K562 (cell line): ENCODE measurements at regions of chr2 and their contacts with region 1.

Region 1: DNA sequence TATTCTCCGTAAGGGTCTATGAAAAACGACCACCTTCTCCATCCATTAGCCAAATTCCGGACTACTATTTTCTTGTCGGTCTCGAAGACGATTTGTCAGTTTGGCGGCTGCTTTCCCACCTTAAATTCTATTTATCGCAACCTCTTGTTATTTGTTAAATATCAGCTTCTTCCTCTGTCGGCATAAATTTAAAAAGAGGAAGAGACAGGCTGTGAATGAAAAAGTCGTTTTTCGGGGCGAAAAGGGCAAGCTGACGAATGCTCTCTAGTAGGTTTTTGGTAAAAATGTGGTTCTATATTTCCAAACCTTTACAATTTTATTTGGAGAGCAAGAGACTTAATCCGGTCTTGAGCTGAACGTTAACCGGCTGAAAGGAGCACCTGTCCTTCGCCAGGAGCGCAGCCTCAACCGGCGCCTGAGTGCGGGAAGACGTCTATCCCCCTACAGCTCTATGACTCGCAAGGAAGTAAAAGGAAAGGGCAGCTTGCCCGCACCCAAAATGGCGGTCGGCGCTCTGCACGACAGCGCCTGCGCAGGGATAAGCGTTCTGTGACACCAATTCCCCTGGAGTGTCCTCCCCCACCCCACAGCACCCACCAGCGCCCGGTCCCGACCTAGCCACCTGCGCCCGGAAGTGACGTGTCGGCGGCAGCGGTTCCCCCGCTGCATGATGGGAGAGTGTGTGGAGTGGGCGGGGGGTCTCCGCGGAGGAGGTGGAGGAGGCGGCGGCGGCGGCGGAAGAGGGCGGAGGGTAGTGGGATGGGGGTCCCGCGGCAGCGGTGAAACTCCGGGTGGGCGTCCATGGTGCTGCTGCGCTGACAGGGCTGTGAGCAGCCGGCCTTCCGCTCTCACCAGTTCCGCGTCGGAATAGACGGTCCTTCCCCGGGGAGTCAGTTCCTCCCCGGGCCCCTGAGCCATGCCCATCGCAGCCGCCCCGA is at the start of gene AFTPH:
- DNase-seq: peak; percentile 97 to 99 (median 98)
- ATAC-seq: peak; percentile 97
- H3K4me3 ChIP-seq: peak within 1 kb of the TSS; percentile 85
- H3K27ac ChIP-seq: peak within 1 kb of the TSS; percentile 74
- H3K4me1 ChIP-seq: peaks cover 0 to 5% of the 10 kb centered on the region in 2 experiments; a peak in 1 of 5 replicates
- H3K27me3 ChIP-seq: peaks cover 0 to 4% of the 10 kb centered on the region in 2 experiments; a peak in 3 of 5 replicates
- CTCF ChIP-seq: no peak
- EP300 ChIP-seq: no peak
- POLR2A ChIP-seq: peak; percentile 83
- RAD21 ChIP-seq: peak in 1 of 2 experiments; percentile 17; a peak in 1 of 4 replicates
- polyA plus RNA-seq, gene AFTPH: 8.0 to 9.3 TPM

Region 2: DNA sequence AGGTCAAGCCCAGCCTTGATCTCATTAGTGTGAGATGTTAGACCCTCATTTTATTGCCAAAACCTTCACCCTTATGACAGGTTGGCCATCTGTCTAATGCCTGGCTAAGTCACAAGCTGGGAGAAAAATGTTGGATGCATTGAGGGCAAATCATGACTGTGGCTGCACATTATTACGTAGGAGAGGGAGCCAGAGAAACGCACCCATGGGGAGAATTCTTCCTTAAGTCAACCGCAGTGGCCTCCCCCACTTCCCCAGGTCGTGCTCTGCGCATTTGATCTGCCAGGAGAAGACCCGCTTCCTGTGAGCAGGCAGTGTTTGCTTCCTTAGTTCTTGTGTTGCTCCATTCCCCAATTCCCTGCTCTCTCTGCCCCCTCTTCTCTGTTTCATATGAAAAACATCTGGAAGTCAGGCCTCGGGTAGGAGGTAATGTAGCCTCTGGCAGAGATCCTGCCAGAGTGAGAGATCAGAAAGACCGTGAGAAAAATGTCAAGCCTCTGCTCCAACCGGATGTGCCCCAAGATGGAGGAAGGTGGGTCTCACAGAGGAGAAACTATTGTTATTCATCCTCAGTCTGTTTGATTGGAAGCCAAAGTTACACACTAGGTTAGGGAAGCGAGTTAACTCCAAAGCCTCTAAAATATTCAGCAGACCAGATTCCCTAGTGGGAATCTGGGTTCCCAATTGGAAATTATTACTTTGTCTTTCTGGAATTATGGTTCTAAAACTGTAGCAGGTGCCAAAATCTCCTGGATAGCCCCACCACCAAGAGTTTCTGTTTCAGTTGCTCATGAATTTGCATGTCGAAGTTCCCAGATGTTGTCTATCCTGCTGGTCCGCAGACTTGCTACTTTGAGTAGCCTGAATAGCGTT is 235.4 kb before region 1 on chr2:
- CTCF ChIA-PET with region 1: no interaction called
- POLR2A ChIA-PET with region 1: no interaction called
- in situ Hi-C with region 1: no loop called
- intact Hi-C with region 1: no loop called
- DNase-seq: no peak
- ATAC-seq: no peak
- H3K4me3 ChIP-seq: no peak overlapping the region
- H3K27ac ChIP-seq: no peak overlapping the region
- H3K4me1 ChIP-seq: peaks cover 0 to 2% of the 10 kb centered on the region in 2 experiments; a peak in 1 of 5 replicates
- H3K27me3 ChIP-seq: peaks cover 23 to 39% of the 10 kb centered on the region in 2 experiments
- CTCF ChIP-seq: no peak
- EP300 ChIP-seq: no peak
- POLR2A ChIP-seq: no peak
- RAD21 ChIP-seq: no peak

Region 3: GRCh38 chr2:64562148-64562784 is 38.3 kb after region 1 on chr2:
- CTCF ChIA-PET with region 1: interaction called, 6 read pairs
- POLR2A ChIA-PET with region 1: interaction called, 3 read pairs
- in situ Hi-C with region 1: no loop called
- intact Hi-C with region 1: loop called (anchors 2 kb)
- DNase-seq: no peak
- ATAC-seq: no peak
- H3K4me3 ChIP-seq: no peak overlapping the region
- H3K27ac ChIP-seq: no peak overlapping the region
- H3K4me1 ChIP-seq: no peaks in the 10 kb centered on the region
- H3K27me3 ChIP-seq: no peaks in the 10 kb centered on the region
- CTCF ChIP-seq: peak in 2 of 3 experiments; percentile 12 to 51; a peak in 3 of 6 replicates
- EP300 ChIP-seq: no peak
- POLR2A ChIP-seq: no peak
- RAD21 ChIP-seq: peak in 1 of 2 experiments; percentile 21; a peak in 2 of 4 replicates

Region 4: GRCh38 chr2:64626963-64627760 is 103.2 kb after region 1 on chr2:
- CTCF ChIA-PET with region 1: no interaction called
- POLR2A ChIA-PET with region 1: no interaction called
- in situ Hi-C with region 1: no loop called
- intact Hi-C with region 1: loop called (anchors 5 kb)
- DNase-seq: no peak
- ATAC-seq: no peak
- H3K4me3 ChIP-seq: no peak overlapping the region
- H3K27ac ChIP-seq: no peak overlapping the region
- H3K4me1 ChIP-seq: peaks cover 0 to 8% of the 10 kb centered on the region in 2 experiments; a peak in 3 of 5 replicates
- H3K27me3 ChIP-seq: no peaks in the 10 kb centered on the region
- CTCF ChIP-seq: no peak
- EP300 ChIP-seq: no peak
- POLR2A ChIP-seq: no peak
- RAD21 ChIP-seq: no peak

Region 5: GRCh38 chr2:64873472-64873924 is 349.6 kb after region 1 on chr2:
- CTCF ChIA-PET with region 1: interaction called, 10 read pairs
- POLR2A ChIA-PET with region 1: interaction called, 3 read pairs
- in situ Hi-C with region 1: no loop called
- intact Hi-C with region 1: loop called (anchors 2 kb)
- DNase-seq: peak; percentile 77 to 86 (median 84)
- ATAC-seq: peak; percentile 95
- H3K4me3 ChIP-seq: no peak overlapping the region
- H3K27ac ChIP-seq: no peak overlapping the region
- H3K4me1 ChIP-seq: peaks cover 7 to 14% of the 10 kb centered on the region in 2 experiments; a peak in 4 of 5 replicates
- H3K27me3 ChIP-seq: no peaks in the 10 kb centered on the region
- CTCF ChIP-seq: peak; percentile 89 to 96 (median 91)
- EP300 ChIP-seq: no peak
- POLR2A ChIP-seq: no peak
- RAD21 ChIP-seq: peak; percentile 82 to 94

Region 6: DNA sequence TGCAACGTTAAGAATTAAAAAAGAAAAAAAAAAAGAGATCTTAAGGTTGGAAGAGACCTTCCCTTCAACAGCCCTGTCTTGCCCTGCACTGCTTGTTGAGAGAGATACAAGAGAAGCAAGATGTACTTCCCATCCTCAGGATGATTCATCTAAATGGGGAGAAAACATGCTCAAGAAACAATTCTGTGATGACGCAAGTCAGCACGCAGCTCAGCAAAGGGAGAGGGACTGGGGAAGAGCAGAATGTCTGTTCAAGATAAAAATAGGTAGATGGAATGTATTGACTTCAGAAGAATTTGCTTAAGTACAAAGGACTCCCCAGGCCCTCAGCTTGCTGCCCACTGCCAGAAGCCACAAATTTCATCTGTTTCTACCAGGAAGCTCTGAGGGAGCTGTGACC is 1106.7 kb after region 1 on chr2:
- CTCF ChIA-PET with region 1: no interaction called
- POLR2A ChIA-PET with region 1: no interaction called
- in situ Hi-C with region 1: no loop called
- intact Hi-C with region 1: no loop called
- DNase-seq: peak in 1 of 4 experiments; percentile 14
- ATAC-seq: peak; percentile 33; the same call in 1 of the 3 replicates
- H3K4me3 ChIP-seq: no peak overlapping the region
- H3K27ac ChIP-seq: no peak overlapping the region
- H3K4me1 ChIP-seq: no peaks in the 10 kb centered on the region
- H3K27me3 ChIP-seq: peaks cover 6% of the 10 kb centered on the region in 2 experiments; a peak in 3 of 5 replicates
- CTCF ChIP-seq: no peak
- EP300 ChIP-seq: no peak
- POLR2A ChIP-seq: no peak
- RAD21 ChIP-seq: no peak